Ascending aorta (tissue), 2 donors: ENCODE measurements at regions of chr1 and their contacts with region 1.

Region 1: GRCh38 chr1:50929376-50929958 is 30.6 kb downstream of the FAF1 start:
- DNase-seq: no peak
- H3K4me3 ChIP-seq: no peak overlapping the region
- H3K27ac ChIP-seq: no peak overlapping the region
- H3K4me1 ChIP-seq: no peaks in the 10 kb centered on the region
- H3K27me3 ChIP-seq: no peaks in the 10 kb centered on the region
- CTCF ChIP-seq: peak; percentile 27 to 62 (median 48)

Region 2: GRCh38 chr1:51002516-51002915 is 73.0 kb after region 1 on chr1:
- intact Hi-C with region 1: no loop called
- DNase-seq: no peak
- H3K4me3 ChIP-seq: no peak overlapping the region
- H3K27ac ChIP-seq: no peak overlapping the region
- H3K4me1 ChIP-seq: no peaks in the 10 kb centered on the region
- H3K27me3 ChIP-seq: no peaks in the 10 kb centered on the region
- CTCF ChIP-seq: no peak

Region 3: GRCh38 chr1:51044834-51045233 is 115.4 kb after region 1 on chr1:
- intact Hi-C with region 1: loop called (anchors 10 kb)
- DNase-seq: no peak
- H3K4me3 ChIP-seq: no peak overlapping the region
- H3K27ac ChIP-seq: no peak overlapping the region
- H3K4me1 ChIP-seq: no peaks in the 10 kb centered on the region
- H3K27me3 ChIP-seq: no peaks in the 10 kb centered on the region
- CTCF ChIP-seq: peak in 1 of 3 experiments; percentile 29

Region 4: DNA sequence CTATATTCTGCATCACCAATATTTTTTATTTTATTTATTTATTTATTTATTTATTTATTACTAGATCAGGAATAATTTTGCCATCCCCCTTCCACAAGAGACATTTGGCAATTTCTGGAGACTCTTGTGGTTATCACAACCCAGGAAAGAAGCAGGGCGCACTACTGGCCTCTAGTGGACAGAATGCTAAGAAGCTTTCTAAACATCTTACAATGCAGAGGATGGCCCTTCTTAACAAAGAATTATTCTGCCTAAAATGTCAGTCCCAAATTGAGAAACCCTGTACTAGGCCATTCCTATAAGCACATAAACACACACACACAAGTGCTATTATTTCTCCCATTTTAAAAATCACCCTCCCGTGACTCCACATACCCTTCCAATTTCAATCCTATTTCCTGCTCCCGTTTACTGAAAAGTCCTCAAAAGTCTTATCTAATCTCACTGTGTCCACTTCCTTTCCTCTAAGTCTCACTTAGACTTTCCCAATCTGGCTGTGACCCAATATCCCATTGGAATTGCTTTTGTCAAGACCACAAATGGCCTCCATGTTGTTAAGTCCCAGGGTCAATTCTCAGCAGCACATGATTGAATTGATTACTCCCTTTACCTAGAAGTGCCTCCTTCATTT is 262.9 kb after region 1 on chr1:
- intact Hi-C with region 1: loop called (anchors 5 kb)
- DNase-seq: peak in 1 of 2 donors; percentile 80
- H3K4me3 ChIP-seq: no peak overlapping the region
- H3K27ac ChIP-seq: no peak overlapping the region
- H3K4me1 ChIP-seq: no peaks in the 10 kb centered on the region
- H3K27me3 ChIP-seq: no peaks in the 10 kb centered on the region
- CTCF ChIP-seq: peak; percentile 40 to 89 (median 85)